IMR-90 (cell line): ENCODE measurements at regions of chr4 and their contacts with region 1.

Region 1: DNA sequence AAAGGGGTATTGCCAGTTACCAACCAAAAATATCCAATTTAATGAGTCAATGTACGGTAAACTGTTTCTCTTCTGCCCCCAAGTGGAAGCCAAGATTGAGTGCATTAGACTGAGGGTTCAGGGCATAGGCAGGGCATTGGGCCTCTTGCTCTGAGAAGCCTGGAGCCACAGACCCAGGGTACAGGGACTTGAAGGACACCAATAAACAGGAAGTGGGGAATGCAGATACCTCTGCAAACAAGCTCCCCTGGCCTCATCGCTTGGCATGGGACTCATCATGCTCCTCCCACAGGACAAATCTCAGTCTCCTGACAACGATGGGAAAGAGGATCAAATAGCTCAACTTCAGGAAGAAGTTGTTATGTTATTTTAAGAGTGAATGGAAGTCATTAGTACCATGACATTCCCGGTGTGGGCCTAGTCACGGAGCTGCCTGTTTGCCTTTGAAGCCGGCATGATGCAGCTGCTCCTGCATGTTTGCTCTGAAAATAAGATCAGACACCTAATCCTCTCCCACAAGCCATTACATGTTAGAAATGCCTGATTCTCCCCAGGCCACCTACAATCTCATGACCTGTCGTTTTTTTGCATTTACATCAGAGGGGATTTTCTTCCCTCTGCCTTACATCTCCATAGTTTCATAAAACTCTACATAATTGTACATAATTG is 224.2 kb downstream of the RCHY1 start:
- DNase-seq: no peak
- ATAC-seq: peak; percentile 61; the same call in 1 of the 2 replicates
- H3K4me3 ChIP-seq: no peak overlapping the region
- H3K27ac ChIP-seq: no peak overlapping the region
- H3K4me1 ChIP-seq: no peaks in the 10 kb centered on the region
- H3K27me3 ChIP-seq: peaks cover 4% of the 10 kb centered on the region
- CTCF ChIP-seq: peak; percentile 35; the same call in 1 of the 2 replicates
- POLR2A ChIP-seq: no peak
- RAD21 ChIP-seq: peak; percentile 16; the same call in 1 of the 2 replicates

Region 2: GRCh38 chr4:74874753-74875367 is 415.2 kb before region 1 on chr4:
- CTCF ChIA-PET with region 1: interaction called, 3 read pairs
- POLR2A ChIA-PET with region 1: no interaction called
- dilution Hi-C with region 1: no loop called
- in situ Hi-C with region 1: no loop called
- intact Hi-C with region 1: loop called (anchors 2 kb)
- DNase-seq: peak; percentile 84
- ATAC-seq: peak; percentile 96
- H3K4me3 ChIP-seq: no peak overlapping the region
- H3K27ac ChIP-seq: no peak overlapping the region
- H3K4me1 ChIP-seq: no peaks in the 10 kb centered on the region
- H3K27me3 ChIP-seq: peaks cover 3% of the 10 kb centered on the region; the same call in 1 of the 2 replicates
- CTCF ChIP-seq: peak; percentile 86
- POLR2A ChIP-seq: no peak
- RAD21 ChIP-seq: peak; percentile 68

Region 3: GRCh38 chr4:74932816-74933561 is 357.1 kb before region 1 on chr4 and contains the start of gene PARM1:
- CTCF ChIA-PET with region 1: no interaction called
- POLR2A ChIA-PET with region 1: no interaction called
- dilution Hi-C with region 1: no loop called
- in situ Hi-C with region 1: no loop called
- intact Hi-C with region 1: loop called (anchors 5 kb)
- DNase-seq: peak; percentile 61
- ATAC-seq: peak; percentile 98
- H3K4me3 ChIP-seq: peak within 1 kb of the TSS; percentile 40
- H3K27ac ChIP-seq: no peak within 1 kb of the TSS
- H3K4me1 ChIP-seq: no peaks in the 10 kb centered on the region
- H3K27me3 ChIP-seq: peaks cover 41% of the 10 kb centered on the region
- CTCF ChIP-seq: peak; percentile 68
- POLR2A ChIP-seq: no peak
- RAD21 ChIP-seq: peak; percentile 73
- total RNA-seq, gene PARM1: under 0.01 and 0.18 TPM in 2 replicates